Transverse colon (tissue), 4 donors: ENCODE measurements at regions of chr7 and their contacts with region 1.

Region 1: DNA sequence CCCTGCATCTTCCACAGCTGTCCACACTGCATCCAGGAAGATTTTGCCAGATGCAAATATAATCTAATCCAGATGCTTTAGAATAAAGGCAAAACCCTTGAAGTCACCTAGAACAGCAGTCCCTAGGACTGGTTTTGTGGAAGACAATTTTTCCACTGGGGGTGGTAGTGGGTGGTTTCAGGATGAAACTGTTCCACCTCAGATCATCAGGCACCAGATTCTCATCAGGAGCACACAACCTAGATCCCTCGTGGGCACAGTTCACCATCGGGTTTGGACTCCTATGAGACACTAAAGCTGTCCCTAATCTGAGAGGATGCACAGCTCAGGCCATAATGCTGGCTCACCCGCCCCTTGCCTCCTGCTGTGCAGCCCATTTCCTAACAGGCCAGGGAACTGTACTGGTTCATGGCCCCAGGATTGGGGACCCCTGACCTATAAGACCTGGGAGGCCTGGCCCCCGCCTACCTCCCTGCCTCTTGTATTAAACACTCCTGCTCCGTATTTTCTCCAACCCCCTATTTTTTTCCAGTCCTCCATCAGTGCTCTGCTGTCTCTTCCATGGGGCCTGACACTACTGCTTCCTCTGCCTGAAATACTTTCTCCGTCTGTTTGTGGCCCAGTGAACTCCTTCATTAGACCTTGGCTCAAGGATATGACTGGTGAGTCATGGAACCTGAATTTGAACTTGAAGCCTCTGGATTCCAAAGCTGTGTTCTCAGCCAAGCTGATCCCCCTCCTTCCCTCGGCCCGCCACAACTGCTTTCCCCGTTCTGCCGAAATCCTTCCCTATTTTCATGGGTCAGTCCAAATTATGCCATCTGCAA is 79.9 kb upstream of the RHEB start:
- DNase-seq: peak; percentile 16
- H3K4me3 ChIP-seq: no peak overlapping the region
- H3K27ac ChIP-seq: peak overlapping the region; percentile 71 to 87 (median 81)
- H3K4me1 ChIP-seq: peaks cover 0 to 23% (median 18%) of the 10 kb centered on the region in 4 donors
- H3K27me3 ChIP-seq: no peaks in the 10 kb centered on the region
- CTCF ChIP-seq: no peak
- EP300 ChIP-seq: no peak
- POLR2A ChIP-seq: no peak

Region 2: DNA sequence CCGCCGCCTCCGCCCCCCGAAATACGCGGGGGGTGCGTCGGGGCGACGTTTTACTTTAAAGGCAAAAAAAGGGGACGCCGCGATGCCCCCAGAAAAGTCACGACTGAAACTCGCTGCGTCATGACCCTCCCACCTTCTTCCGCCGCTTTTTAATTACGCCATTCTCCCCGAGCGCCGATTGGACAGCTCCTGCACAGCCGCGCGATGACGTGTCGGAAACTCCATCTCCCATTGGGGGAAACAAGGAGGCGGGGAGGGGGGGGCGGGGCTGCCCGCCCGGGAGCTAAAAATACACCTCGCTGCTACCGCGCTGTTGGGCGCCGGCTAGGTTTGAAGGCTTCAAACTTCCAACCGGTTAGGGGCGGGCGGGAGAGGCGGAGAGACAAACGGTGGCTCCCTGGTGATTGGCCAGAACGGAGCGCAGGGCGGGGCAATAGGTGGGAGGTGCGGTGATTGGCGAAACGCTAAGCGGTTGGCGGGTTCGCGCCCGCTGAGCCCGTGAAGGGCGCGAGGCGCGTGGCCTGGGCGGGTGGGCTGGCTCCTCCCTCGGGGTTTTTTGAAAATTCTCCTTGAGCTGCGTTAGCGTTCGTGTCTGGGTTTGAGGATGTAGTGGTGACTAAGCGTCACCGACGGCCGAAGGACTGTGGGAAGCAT is 79.7 kb before region 1 on chr7 and contains the start of gene RHEB:
- in situ Hi-C with region 1: no loop called
- intact Hi-C with region 1: loop called (anchors 1 kb)
- DNase-seq: peak; percentile 99
- H3K4me3 ChIP-seq: peak within 1 kb of the TSS; percentile 73 to 97 (median 82)
- H3K27ac ChIP-seq: peak within 1 kb of the TSS; percentile 99 to 100 (median 99)
- H3K4me1 ChIP-seq: peaks cover 3 to 39% (median 26%) of the 10 kb centered on the region in 4 donors
- H3K27me3 ChIP-seq: no peaks in the 10 kb centered on the region
- CTCF ChIP-seq: no peak
- EP300 ChIP-seq: no peak
- POLR2A ChIP-seq: peak; percentile 26
- total RNA-seq, gene RHEB: 12.7 to 70.5 (median 42.8) TPM